ENCODE measurements at regions of chr5 and their contacts with region 1.

Region 1: DNA sequence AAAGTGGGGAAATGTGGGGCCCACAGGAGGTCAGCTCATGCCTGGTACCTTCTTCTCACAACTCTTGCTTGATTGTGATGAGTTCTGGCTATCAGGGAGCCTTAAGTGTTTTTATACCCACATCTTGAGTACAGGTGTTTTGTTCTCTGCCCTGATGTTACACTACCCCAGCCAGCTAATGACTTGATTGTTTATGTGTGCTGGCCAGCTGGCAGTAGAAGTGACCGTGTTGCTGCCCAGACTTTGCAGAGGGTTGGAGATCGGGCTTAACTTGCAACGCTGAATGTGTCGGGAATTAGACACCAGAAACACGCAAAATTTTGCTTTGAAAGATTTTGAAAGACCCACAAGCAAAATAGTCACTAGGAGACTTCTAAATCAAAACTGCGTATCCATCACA is 16.9 kb upstream of the ZDHHC11B start:
- DNase-seq: no peak
- ATAC-seq: no peak
- H3K4me3 ChIP-seq: no peak overlapping the region
- H3K27ac ChIP-seq: no peak overlapping the region
- H3K4me1 ChIP-seq: no peaks in the 10 kb centered on the region
- H3K27me3 ChIP-seq: no peaks in the 10 kb centered on the region
- CTCF ChIP-seq: no peak
- EP300 ChIP-seq: no peak
- POLR2A ChIP-seq: no peak
- RAD21 ChIP-seq: no peak

Region 2: GRCh38 chr5:626850-627249 is 174.6 kb before region 1 on chr5:
- CTCF ChIA-PET with region 1: no interaction called
- POLR2A ChIA-PET with region 1: no interaction called
- in situ Hi-C with region 1: no loop called
- intact Hi-C with region 1: no loop called
- DNase-seq: no peak
- ATAC-seq: no peak
- H3K4me3 ChIP-seq: no peak overlapping the region
- H3K27ac ChIP-seq: no peak overlapping the region
- H3K4me1 ChIP-seq: peaks cover 0 to 10% of the 10 kb centered on the region in 2 experiments; a peak in 1 of 5 replicates
- H3K27me3 ChIP-seq: no peaks in the 10 kb centered on the region
- CTCF ChIP-seq: no peak
- EP300 ChIP-seq: no peak
- POLR2A ChIP-seq: no peak
- RAD21 ChIP-seq: no peak

Region 3: DNA sequence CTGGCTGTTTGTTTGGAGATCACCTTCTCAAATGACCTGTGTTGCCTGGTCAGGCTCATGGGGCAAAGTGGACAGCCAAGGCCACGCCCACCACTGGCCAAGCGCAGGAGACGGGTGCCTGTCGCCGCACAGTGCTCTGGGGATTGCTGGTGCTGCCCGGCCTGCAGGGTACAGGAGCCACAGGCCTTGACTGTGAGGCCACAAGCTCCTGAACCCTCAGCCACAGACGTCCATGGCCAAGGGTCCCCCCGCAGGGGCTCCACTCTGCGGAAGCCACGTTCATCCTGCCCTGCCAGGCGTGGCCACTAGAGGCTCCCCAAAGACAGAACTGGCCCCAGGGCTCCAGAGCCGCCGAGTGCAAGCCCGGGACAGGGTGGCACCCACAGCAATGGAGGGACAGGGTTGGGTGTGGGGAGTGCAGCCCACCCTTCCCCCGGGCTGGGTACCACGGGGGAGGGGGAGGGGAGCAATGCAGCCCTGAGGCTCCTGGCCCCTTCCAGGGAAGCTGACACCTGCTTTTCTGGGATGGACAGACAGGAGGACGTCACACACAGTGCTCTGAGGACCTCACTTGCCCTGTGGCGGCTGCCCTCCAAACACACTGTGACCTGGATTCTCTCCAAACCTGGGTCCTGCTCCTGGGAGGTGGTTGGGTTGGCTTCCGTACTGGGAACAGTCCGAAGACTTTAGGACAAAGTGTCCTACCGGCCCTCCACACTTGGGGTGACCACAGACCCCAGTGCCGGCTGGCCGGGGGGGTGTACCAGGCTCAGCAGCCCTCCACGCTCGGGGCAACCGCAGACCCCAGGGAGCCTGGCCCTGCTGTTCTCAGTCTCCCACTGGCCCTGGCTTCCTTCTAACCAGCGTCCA is 129.8 kb before region 1 on chr5:
- CTCF ChIA-PET with region 1: no interaction called
- POLR2A ChIA-PET with region 1: no interaction called
- in situ Hi-C with region 1: no loop called
- intact Hi-C with region 1: no loop called
- DNase-seq: peak; percentile 79 to 83 (median 82)
- ATAC-seq: peak; percentile 88
- H3K4me3 ChIP-seq: no peak overlapping the region
- H3K27ac ChIP-seq: no peak overlapping the region
- H3K4me1 ChIP-seq: peaks cover 4 to 77% of the 10 kb centered on the region in 2 experiments; a peak in 4 of 5 replicates
- H3K27me3 ChIP-seq: no peaks in the 10 kb centered on the region
- CTCF ChIP-seq: peak; percentile 91 to 96 (median 93)
- EP300 ChIP-seq: no peak
- POLR2A ChIP-seq: peak; percentile 55
- RAD21 ChIP-seq: peak; percentile 85 to 91

Region 4: GRCh38 chr5:717143-717542 is 84.3 kb before region 1 on chr5:
- CTCF ChIA-PET with region 1: no interaction called
- POLR2A ChIA-PET with region 1: no interaction called
- in situ Hi-C with region 1: loop called (anchors 5 kb)
- intact Hi-C with region 1: no loop called
- DNase-seq: no peak
- ATAC-seq: no peak
- H3K4me3 ChIP-seq: no peak overlapping the region
- H3K27ac ChIP-seq: no peak overlapping the region
- H3K4me1 ChIP-seq: no peaks in the 10 kb centered on the region
- H3K27me3 ChIP-seq: no peaks in the 10 kb centered on the region
- CTCF ChIP-seq: no peak
- EP300 ChIP-seq: no peak
- POLR2A ChIP-seq: no peak
- RAD21 ChIP-seq: no peak

Region 5: DNA sequence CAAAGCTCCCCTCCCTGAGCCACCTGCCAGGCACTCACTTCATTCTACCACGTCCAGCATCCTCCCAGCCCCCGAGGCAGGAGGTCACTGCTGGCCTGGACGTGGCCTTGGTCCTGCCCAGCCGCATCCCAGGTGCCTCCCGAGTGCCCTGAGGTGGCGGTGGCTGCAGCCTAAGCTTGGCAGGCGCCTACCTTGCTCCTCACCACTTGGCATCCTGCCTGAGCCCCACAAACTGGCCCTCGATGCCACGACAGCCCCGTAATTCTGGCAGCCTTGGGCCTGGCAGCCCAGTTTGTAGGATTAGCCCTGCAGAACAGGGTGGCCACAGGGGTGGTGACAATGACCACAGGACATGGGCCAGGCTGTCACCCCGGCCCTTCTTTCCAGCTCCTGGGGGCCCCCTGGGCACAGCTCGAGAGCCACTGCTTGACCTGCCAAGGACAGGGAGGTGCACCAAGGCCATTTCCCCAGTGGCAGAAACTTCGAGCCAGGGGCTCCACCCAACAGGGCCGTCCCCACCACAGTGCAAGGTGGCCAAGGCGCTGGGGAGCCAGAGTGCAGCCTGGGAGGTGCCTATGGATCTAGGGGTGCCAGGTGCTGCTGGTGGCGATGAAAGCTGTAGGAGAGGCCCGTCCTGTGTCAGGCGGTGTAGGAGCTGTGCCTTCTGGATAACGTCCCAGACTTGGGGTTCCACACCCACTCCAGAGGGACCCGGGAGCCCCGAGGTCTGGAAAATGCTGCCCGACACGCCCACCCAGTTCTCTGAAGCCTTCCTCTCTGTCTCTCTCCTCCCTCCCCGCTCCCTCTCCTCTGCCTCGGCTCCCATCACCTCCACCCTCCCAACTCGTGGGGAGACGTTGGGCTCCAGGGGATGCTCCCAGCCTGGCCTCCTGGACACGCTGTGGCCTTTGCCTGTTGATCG is 225.5 kb after region 1 on chr5:
- CTCF ChIA-PET with region 1: no interaction called
- POLR2A ChIA-PET with region 1: no interaction called
- in situ Hi-C with region 1: no loop called
- intact Hi-C with region 1: no loop called
- DNase-seq: no peak
- ATAC-seq: no peak
- H3K4me3 ChIP-seq: no peak overlapping the region
- H3K27ac ChIP-seq: no peak overlapping the region
- H3K4me1 ChIP-seq: peaks cover 0 to 9% of the 10 kb centered on the region in 2 experiments; a peak in 1 of 5 replicates
- H3K27me3 ChIP-seq: peaks cover 12 to 52% of the 10 kb centered on the region in 2 experiments; a peak in 4 of 5 replicates
- CTCF ChIP-seq: no peak
- EP300 ChIP-seq: no peak
- POLR2A ChIP-seq: no peak
- RAD21 ChIP-seq: no peak